ENCODE measurements at regions of chr19 and their contacts with region 1.

Region 1: DNA sequence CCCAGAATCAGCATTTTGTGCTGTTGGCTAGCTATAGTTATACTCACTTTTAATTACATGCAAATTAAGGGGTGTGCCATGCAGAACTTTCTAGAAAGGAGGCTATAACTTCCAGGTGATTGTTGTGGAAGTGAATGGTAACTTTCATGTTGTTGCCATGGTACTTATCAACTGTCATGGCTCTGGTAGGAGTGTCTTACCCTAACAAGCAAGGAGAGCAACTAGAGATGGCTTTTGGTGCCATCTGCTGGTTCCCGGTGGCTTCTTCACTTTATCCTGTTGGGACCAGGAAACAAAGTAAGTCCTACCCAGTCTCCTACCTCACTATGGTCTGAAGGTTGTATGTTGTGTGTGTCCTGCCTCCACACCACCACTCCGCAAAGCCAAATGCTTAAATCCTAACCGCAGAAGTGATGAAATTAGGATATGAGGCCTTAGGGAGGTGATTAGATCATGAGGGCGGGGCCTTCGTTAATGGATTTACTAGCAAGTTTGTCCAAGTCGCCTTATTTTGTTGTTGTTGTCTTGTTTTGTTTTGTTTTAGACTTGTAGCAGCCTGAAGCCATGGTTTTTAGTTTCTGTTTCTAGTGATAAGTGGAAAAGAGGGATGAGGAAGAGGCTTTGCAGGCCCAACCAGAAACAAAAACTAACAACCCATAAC is 22.6 kb downstream of the FBXL12 start:
- DNase-seq: peak; percentile 91
- ATAC-seq: peak; percentile 28
- H3K4me3 ChIP-seq: no peak overlapping the region
- H3K27ac ChIP-seq: no peak overlapping the region
- H3K4me1 ChIP-seq: no peaks in the 10 kb centered on the region
- H3K27me3 ChIP-seq: no peaks in the 10 kb centered on the region
- CTCF ChIP-seq: peak; percentile 92
- POLR2A ChIP-seq: no peak
- RAD21 ChIP-seq: peak; percentile 91

Region 2: DNA sequence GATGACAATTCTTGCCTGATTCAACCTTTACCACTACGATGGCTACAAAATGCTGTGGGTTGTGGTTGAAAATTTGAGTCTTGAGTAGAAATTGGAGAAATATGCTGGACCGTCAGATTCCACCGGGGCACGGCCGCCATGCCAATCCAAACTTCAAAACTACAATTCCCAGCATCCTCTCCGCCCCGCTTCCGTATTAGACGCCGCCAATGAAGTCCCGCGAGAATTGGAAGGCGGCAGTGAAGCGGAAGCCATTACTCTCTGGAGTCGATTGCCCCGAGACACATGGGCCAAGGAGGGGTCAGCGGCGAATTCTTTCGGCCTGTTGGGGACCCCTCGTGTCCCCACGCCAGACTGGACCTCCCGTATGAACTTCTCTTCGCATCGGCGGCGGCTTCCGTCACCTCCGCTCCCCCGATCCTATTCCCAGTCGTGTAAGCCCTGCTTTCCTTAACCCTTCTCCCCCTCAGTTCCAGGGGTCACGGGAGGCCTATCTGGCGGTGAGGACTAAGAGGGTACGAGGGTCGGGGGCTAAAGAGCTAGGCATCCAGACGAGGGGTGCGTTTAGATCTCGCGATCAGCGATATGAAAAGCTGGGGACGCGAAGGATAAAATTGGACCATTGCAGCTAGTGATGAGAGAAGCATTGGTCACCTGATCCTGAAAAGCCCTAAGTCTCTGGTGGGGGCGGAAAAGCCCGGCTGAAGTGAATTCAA is 655.9 kb before region 1 on chr19 and contains the start of gene ZNF317:
- CTCF ChIA-PET with region 1: no interaction called
- POLR2A ChIA-PET with region 1: no interaction called
- dilution Hi-C with region 1: no loop called
- in situ Hi-C with region 1: loop called (anchors 10 kb)
- intact Hi-C with region 1: loop called (anchors 2 kb)
- DNase-seq: peak; percentile 88
- ATAC-seq: peak; percentile 97
- H3K4me3 ChIP-seq: peak within 1 kb of the TSS; percentile 88
- H3K27ac ChIP-seq: peak within 1 kb of the TSS; percentile 93
- H3K4me1 ChIP-seq: no peaks in the 10 kb centered on the region
- H3K27me3 ChIP-seq: no peaks in the 10 kb centered on the region
- CTCF ChIP-seq: no peak
- POLR2A ChIP-seq: peak; percentile 81
- RAD21 ChIP-seq: no peak
- total RNA-seq, gene ZNF317: 16.4 and 17.6 TPM in 2 replicates

Region 3: DNA sequence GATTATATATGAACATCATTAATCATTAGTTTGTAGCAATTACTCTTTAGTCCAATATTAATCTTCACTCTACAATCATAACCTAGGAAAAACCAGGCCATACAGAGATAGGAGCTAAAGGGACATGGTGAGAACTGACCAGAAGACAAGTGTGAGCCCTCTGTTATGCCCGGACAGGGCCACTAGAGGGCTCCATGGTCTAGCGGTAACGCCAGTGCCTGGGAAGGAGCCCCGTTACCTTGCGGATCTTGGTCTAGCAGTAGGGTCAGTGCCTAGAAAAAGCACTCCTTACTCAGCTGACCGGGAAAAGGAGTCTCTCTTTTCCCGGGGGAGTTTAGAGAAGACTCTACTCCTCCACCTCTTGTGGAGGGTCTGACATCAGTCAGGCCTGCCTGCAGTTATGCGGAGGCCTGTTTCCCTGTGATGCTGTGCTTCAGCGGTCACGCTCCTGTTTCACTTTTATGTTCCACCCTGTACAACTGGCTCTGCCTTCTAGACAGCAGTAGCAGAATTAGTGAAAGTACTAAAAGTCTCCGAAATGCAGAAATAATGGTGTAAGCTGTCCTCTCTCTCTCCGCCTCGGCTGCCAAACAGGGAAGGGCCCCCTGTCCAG is 590.6 kb before region 1 on chr19:
- CTCF ChIA-PET with region 1: no interaction called
- POLR2A ChIA-PET with region 1: no interaction called
- dilution Hi-C with region 1: no loop called
- in situ Hi-C with region 1: loop called (anchors 10 kb)
- intact Hi-C with region 1: loop called (anchors 1 kb)
- DNase-seq: peak; percentile 54
- ATAC-seq: peak; percentile 97
- H3K4me3 ChIP-seq: peak overlapping the region; percentile 17
- H3K27ac ChIP-seq: no peak overlapping the region
- H3K4me1 ChIP-seq: no peaks in the 10 kb centered on the region
- H3K27me3 ChIP-seq: no peaks in the 10 kb centered on the region
- CTCF ChIP-seq: peak; percentile 72
- POLR2A ChIP-seq: no peak
- RAD21 ChIP-seq: peak; percentile 79

Region 4: DNA sequence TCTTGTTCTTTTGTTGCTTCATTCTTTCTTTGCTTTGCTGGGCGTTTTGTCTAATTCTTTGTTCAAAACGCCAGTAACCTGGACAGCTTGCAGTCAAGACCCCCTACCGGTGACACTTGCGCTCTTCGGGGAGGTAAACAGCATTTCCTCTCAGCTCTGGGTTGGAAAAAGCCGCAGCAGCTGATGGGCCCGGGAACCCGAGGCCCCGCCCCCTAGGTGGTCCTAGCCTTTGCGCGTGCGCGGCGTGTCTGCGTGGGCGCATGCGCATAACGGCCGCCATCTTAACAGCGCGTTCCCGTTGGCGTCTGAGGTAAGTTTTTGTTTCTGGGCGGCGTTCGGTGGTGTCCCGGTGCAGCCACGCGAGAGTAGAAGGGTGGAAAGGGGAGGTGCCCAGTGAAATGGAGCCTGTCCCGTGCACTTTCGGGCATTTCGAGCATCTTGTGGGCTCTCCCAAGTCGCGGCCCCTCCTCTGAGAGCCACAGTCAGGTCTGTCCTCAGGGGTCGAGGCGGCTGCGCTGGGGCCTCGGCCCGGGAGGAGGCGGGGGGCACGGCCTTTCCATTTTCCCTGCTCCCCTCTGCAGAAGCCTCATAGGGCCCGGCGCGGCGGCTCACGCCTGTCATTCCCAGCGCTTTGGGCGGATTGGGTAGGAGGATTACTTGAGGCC is 472.2 kb before region 1 on chr19 and contains the start of gene ZNF559:
- CTCF ChIA-PET with region 1: no interaction called
- POLR2A ChIA-PET with region 1: no interaction called
- dilution Hi-C with region 1: no loop called
- in situ Hi-C with region 1: loop called (anchors 10 kb)
- intact Hi-C with region 1: no loop called
- DNase-seq: peak; percentile 92
- ATAC-seq: peak; percentile 98
- H3K4me3 ChIP-seq: peak within 1 kb of the TSS; percentile 66
- H3K27ac ChIP-seq: peak within 1 kb of the TSS; percentile 54
- H3K4me1 ChIP-seq: 0 out of 2 replicates have a peak, but pooled peaks cover 2% of the 10 kb centered on the region
- H3K27me3 ChIP-seq: no peaks in the 10 kb centered on the region
- CTCF ChIP-seq: peak; percentile 33
- POLR2A ChIP-seq: 0 out of 2 replicates have a peak, but pooled peaks have one; percentile 26
- RAD21 ChIP-seq: no peak
- total RNA-seq, gene ZNF559: 8.8 and 9.4 TPM in 2 replicates

Region 5: DNA sequence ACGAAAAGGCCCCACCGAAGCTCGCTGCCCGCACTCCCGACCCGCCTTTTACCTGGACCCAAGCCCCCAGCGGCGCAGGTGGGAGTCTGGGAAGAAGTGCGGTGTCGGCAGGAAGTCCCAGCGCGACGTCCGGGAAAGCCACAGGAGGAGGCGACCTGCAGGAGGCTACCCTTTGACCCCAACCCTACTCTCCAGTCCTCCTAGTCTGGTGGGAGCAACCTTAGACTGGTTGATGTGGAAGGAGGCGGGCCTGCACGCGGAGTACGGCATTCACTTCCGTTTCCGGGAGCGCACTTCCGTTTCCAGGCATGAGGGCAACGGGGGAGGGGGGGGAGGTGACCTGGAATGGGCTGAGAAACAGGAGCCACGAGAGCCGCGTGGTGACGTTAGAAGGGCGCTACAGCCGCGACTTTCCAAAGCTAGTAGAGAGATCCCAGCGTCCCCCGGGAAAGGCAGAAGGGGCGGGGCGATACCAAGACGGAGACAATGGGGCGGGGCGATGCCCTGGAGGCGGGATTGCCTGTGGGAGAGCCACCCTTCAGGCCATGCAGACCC is 389.4 kb before region 1 on chr19:
- CTCF ChIA-PET with region 1: no interaction called
- POLR2A ChIA-PET with region 1: no interaction called
- dilution Hi-C with region 1: no loop called
- in situ Hi-C with region 1: no loop called
- intact Hi-C with region 1: loop called (anchors 5 kb)
- DNase-seq: peak; percentile 92
- ATAC-seq: peak; percentile 98
- H3K4me3 ChIP-seq: peak overlapping the region; percentile 86
- H3K27ac ChIP-seq: peak overlapping the region; percentile 46
- H3K4me1 ChIP-seq: no peaks in the 10 kb centered on the region
- H3K27me3 ChIP-seq: no peaks in the 10 kb centered on the region
- CTCF ChIP-seq: no peak
- POLR2A ChIP-seq: no peak
- RAD21 ChIP-seq: no peak

Region 6: GRCh38 chr19:9621156-9622037 is 174.8 kb before region 1 on chr19 and contains the start of gene ZNF561:
- CTCF ChIA-PET with region 1: interaction called, 3 read pairs
- POLR2A ChIA-PET with region 1: no interaction called
- dilution Hi-C with region 1: loop called (anchors 10 kb)
- in situ Hi-C with region 1: loop called (anchors 5 kb)
- intact Hi-C with region 1: no loop called
- DNase-seq: peak; percentile 89
- ATAC-seq: peak; percentile 85
- H3K4me3 ChIP-seq: peak within 1 kb of the TSS; percentile 68
- H3K27ac ChIP-seq: peak within 1 kb of the TSS; percentile 99
- H3K4me1 ChIP-seq: peaks cover 4% of the 10 kb centered on the region; the same call in 1 of the 2 replicates
- H3K27me3 ChIP-seq: no peaks in the 10 kb centered on the region
- CTCF ChIP-seq: no peak
- POLR2A ChIP-seq: peak; percentile 80
- RAD21 ChIP-seq: no peak
- total RNA-seq, gene ZNF561: 38.9 TPM in 2 replicates

Region 7: DNA sequence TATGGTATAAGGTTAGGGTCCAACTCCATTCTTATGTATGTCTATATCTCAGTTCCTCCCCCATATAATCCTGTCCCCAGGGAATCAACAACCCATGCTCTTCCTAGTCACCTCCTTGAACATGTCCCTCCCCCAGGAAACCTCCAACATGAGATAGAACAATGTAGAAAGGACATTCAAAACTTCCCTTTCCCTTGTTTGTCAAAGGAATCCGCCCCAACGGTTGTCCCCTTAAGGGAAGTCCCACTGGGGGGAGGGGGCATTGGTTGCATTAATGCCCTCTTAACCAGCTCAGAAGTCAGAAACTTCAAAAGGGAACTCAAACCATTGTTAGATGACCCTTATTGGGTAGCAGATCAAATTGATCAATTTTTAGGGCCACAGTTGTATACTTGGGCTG is 168.4 kb before region 1 on chr19:
- CTCF ChIA-PET with region 1: interaction called, 3 read pairs
- POLR2A ChIA-PET with region 1: no interaction called
- dilution Hi-C with region 1: loop called (anchors 10 kb)
- in situ Hi-C with region 1: loop called (anchors 5 kb)
- intact Hi-C with region 1: no loop called
- DNase-seq: no peak
- ATAC-seq: no peak
- H3K4me3 ChIP-seq: no peak overlapping the region
- H3K27ac ChIP-seq: no peak overlapping the region
- H3K4me1 ChIP-seq: no peaks in the 10 kb centered on the region
- H3K27me3 ChIP-seq: no peaks in the 10 kb centered on the region
- CTCF ChIP-seq: no peak
- POLR2A ChIP-seq: no peak
- RAD21 ChIP-seq: no peak

Region 8: DNA sequence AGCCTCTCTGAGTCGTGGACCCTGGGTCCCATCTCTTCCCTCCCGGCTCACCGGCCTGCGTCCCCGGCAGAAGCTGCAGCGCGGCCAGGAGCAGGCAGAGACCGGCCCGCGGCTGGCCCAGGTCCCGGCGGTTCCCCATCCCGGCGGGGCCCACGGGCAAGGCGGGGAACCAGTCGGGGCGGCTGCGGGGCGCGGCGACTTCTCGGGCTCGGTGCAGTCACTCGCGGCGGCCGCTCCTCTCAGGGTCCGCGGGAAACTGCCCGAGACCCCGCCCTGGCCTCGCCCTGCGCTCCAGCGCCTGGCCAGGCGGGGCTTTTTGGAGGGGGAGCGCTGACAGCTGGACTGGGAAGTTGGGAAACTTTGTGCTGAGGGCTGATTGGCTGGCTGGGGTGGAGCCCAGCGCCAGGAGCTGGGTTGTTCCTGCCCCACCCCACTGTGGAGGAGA is 214.0 kb after region 1 on chr19 and contains the start of gene COL5A3:
- CTCF ChIA-PET with region 1: no interaction called
- POLR2A ChIA-PET with region 1: no interaction called
- dilution Hi-C with region 1: no loop called
- in situ Hi-C with region 1: no loop called
- intact Hi-C with region 1: no loop called
- DNase-seq: peak; percentile 58
- ATAC-seq: peak; percentile 48
- H3K4me3 ChIP-seq: peak within 1 kb of the TSS; percentile 35
- H3K27ac ChIP-seq: no peak within 1 kb of the TSS; the same call in 1 of the 2 replicates
- H3K4me1 ChIP-seq: peaks cover 15% of the 10 kb centered on the region
- H3K27me3 ChIP-seq: no peaks in the 10 kb centered on the region
- CTCF ChIP-seq: no peak
- POLR2A ChIP-seq: no peak
- RAD21 ChIP-seq: no peak
- total RNA-seq, gene COL5A3: 0.54 and 0.56 TPM in 2 replicates

Measured in IMR-90 (cell line).